Esophagus muscularis mucosa (tissue), 4 donors: ENCODE measurements at regions of chr2 and their contacts with region 1.

Region 1: DNA sequence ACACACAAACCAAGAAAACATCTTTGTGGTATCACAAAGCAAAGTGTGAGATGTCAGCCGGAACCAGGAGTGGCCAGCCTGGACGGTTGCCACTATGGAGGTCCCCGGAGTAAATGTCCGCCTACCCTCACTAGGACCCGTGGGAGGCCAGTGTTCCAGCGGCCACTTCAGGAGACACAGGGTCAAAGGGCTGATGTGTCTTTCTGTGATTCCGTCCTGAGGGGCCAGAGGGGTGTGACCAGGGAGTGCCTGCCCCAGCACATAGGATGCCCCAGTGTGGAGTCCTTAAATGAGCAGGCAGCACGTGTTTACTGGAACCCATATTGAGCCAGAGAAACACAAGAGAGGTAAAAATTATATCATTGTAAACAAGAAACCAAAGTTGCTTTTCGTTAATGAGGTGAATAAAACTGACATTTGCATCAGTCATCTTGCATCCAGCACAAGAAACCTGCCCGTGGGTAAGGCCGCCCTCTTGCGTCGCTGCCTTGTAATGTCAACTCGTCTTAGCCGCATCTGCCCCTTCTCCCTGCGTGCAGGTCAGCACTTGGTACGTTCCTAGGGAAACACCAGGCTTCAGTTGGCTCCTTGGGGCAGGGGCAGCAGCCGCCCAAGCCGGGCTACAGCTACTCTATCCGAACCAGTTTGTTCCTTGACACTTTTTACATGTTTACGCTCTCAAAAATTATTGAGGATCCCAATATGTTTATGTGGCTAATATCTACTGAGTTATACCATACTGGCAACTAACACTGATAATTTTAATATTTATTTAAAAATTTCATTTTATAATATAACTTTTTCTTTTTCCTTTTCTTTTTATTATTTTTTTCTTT is 46.7 kb upstream of the LAPTM4A start:
- DNase-seq: peak; percentile 95
- H3K4me3 ChIP-seq: no peak overlapping the region
- H3K27ac ChIP-seq: no peak overlapping the region
- H3K4me1 ChIP-seq: peaks cover 3 to 15% (median 8%) of the 10 kb centered on the region in 4 donors
- H3K27me3 ChIP-seq: peaks cover 0 to 5% (median 0%) of the 10 kb centered on the region in 4 donors
- CTCF ChIP-seq: peak; percentile 85 to 91 (median 90)
- EP300 ChIP-seq: no peak
- POLR2A ChIP-seq: no peak

Region 2: DNA sequence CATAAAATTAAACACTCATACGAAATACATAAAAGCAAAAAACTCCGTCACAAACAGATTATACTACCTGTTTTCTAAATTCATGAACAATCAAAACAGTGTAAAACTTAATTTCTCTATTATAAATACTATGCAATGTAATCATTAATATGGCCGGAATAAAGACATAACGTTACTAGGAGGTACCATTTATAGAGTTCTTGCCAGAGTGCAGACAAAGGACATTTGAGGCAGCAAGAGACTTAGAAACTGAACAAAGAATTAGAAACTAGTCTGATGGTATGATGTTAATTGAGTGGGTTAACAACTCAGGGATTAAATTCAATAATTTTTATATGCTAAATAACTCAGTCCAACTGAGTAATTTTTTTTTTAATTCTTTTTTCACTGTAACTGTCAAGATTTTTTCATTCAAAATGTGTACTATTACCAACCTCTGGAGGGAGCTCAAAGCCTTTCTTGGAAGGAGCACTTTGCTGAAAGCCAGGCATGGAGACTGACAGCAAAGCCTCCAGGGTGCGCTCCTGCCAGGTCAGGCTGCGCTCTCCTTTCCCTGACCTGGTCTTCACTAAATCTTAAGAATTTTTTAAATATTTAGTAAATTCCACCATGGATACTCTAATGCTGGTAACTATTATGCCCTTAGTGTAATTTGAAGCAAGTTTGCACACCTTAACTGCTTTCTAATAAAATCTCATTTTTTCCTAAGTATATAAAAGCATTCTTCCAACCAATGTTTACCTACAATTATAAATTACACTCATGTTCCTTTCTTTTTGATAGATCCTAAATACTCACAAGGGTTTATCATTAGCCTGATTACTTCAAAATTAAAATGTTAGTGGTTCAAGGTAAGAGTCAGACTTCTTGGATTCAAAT is 142.3 kb before region 1 on chr2:
- intact Hi-C with region 1: loop called (anchors 5 kb)
- DNase-seq: no peak
- H3K4me3 ChIP-seq: no peak overlapping the region
- H3K27ac ChIP-seq: no peak overlapping the region
- H3K4me1 ChIP-seq: no peaks in the 10 kb centered on the region
- H3K27me3 ChIP-seq: no peaks in the 10 kb centered on the region
- CTCF ChIP-seq: peak; percentile 51 to 66 (median 63)
- EP300 ChIP-seq: no peak
- POLR2A ChIP-seq: no peak

Region 3: GRCh38 chr2:20015472-20016083 is 82.5 kb before region 1 on chr2:
- intact Hi-C with region 1: loop called (anchors 1 kb)
- DNase-seq: no peak
- H3K4me3 ChIP-seq: no peak overlapping the region
- H3K27ac ChIP-seq: no peak overlapping the region
- H3K4me1 ChIP-seq: peaks cover 8 to 20% (median 19%) of the 10 kb centered on the region in 4 donors
- H3K27me3 ChIP-seq: peaks cover 0 to 19% (median 0%) of the 10 kb centered on the region in 4 donors
- CTCF ChIP-seq: peak; percentile 66 to 72 (median 69)
- EP300 ChIP-seq: no peak
- POLR2A ChIP-seq: no peak